T-cell (primary cell): ENCODE measurements at regions of chr2 and their contacts with region 1.

Region 1: DNA sequence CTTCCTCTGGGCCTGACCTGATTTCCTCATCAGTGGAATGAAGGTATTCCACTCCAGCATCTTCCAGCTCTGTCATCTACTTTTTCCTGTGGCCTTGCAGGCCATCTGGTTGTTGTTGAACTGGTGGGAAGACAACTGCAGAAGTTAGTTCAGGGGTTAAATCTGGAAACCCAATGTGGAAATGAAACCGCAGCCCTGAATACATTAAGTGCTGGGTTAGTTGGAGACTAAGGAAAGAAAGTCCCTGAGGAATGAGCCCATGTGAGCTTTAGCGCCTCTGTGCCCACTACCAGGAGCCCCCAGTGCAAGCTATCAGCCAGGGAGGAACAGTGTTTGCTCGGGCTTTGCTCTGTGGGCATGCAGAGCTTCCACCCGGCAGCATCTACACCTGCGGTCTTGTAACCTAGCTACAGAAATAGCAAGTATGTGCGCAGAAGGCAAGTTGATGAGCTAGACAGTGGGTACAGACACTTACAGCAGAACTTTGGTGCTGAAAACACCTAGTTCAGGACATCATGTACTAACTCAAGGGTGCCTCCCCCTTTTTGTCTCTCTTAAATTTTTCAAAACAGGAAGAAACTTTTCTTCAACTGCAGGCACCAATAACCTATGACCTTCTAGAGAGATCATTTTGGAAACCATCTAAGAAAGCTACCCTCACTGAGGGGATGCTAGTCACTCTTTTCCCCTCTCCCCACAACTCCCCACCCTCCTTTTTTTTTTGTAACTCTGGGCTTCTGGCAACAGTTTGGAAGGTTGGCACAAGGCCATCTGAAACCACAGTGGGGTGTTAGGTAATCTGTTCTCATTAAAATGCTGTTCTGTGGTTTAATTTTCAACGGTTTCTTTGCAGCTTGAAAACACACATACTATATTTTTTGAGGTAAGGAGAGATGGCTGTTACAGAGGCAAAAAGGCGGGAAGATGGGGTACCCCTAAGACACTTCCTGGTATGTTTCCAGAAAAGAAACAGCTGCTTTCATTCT is 18.3 kb upstream of the CXCR4 start:
- DNase-seq: peak; percentile 50 to 96 (median 88)
- ATAC-seq: peak; percentile 71 to 82 (median 77)
- H3K4me3 ChIP-seq: peak overlapping the region in 1 of 2 donors; percentile 26
- H3K4me3 Mint-ChIP-seq: peak overlapping the region; percentile 69 to 75 (median 71)
- H3K27ac ChIP-seq: peak overlapping the region; percentile 100
- H3K27ac Mint-ChIP-seq: peak overlapping the region; percentile 96 to 97
- H3K4me1 ChIP-seq: peaks cover 57 to 94% of the 10 kb centered on the region in 2 experiments
- H3K4me1 Mint-ChIP-seq: peaks cover 97 to 98% (median 97%) of the 10 kb centered on the region in 3 donors
- H3K27me3 ChIP-seq: no peaks in the 10 kb centered on the region
- H3K27me3 Mint-ChIP-seq: no peaks in the 10 kb centered on the region

Region 2: GRCh38 chr2:136055929-136056688 is 80.1 kb before region 1 on chr2:
- CTCF ChIA-PET with region 1: no interaction called
- POLR2A ChIA-PET with region 1: interaction called, 3 to 17 read pairs
- DNase-seq: no peak
- ATAC-seq: peak in 3 of 4 experiments; percentile 47 to 54 (median 54)
- H3K4me3 ChIP-seq: no peak overlapping the region
- H3K4me3 Mint-ChIP-seq: peak overlapping the region; percentile 1 to 57 (median 28)
- H3K27ac ChIP-seq: peak overlapping the region; percentile 65
- H3K27ac Mint-ChIP-seq: peak overlapping the region; percentile 89 to 92
- H3K4me1 ChIP-seq: peaks cover 15 to 56% of the 10 kb centered on the region in 2 experiments
- H3K4me1 Mint-ChIP-seq: peaks cover 80 to 89% (median 81%) of the 10 kb centered on the region in 3 donors
- H3K27me3 ChIP-seq: no peaks in the 10 kb centered on the region
- H3K27me3 Mint-ChIP-seq: no peaks in the 10 kb centered on the region

Region 3: GRCh38 chr2:136117909-136118818 is 18.1 kb before region 1 on chr2 and contains the start of gene CXCR4:
- CTCF ChIA-PET with region 1: interaction called in 1 of 2 experiments, 10 read pairs
- POLR2A ChIA-PET with region 1: interaction called, 24 to 121 read pairs
- DNase-seq: peak; percentile 82 to 98 (median 92)
- ATAC-seq: peak; percentile 34 to 54 (median 52)
- H3K4me3 ChIP-seq: peak within 1 kb of the TSS; percentile 89 to 100
- H3K4me3 Mint-ChIP-seq: peak within 1 kb of the TSS; percentile 94 to 99 (median 99)
- H3K27ac ChIP-seq: peak within 1 kb of the TSS; percentile 99
- H3K27ac Mint-ChIP-seq: peak within 1 kb of the TSS; percentile 96 to 97
- H3K4me1 ChIP-seq: peaks cover 26 to 37% of the 10 kb centered on the region in 2 experiments
- H3K4me1 Mint-ChIP-seq: peaks cover 65 to 73% (median 66%) of the 10 kb centered on the region in 3 donors
- H3K27me3 ChIP-seq: no peaks in the 10 kb centered on the region
- H3K27me3 Mint-ChIP-seq: no peaks in the 10 kb centered on the region
- total RNA-seq, gene CXCR4: 274 to 1,514 (median 326) TPM

Region 4: GRCh38 chr2:136154402-136154783 is 18.2 kb after region 1 on chr2:
- CTCF ChIA-PET with region 1: no interaction called
- POLR2A ChIA-PET with region 1: no interaction called
- DNase-seq: no peak
- ATAC-seq: no peak
- H3K4me3 ChIP-seq: no peak overlapping the region
- H3K4me3 Mint-ChIP-seq: no peak overlapping the region
- H3K27ac ChIP-seq: no peak overlapping the region
- H3K27ac Mint-ChIP-seq: no peak overlapping the region
- H3K4me1 ChIP-seq: peaks cover 0 to 3% of the 10 kb centered on the region in 2 experiments
- H3K4me1 Mint-ChIP-seq: peaks cover 15 to 22% (median 18%) of the 10 kb centered on the region in 3 donors
- H3K27me3 ChIP-seq: no peaks in the 10 kb centered on the region
- H3K27me3 Mint-ChIP-seq: no peaks in the 10 kb centered on the region

Region 5: GRCh38 chr2:136238286-136239078 is 102.3 kb after region 1 on chr2:
- CTCF ChIA-PET with region 1: interaction called, 5 to 20 read pairs
- POLR2A ChIA-PET with region 1: interaction called, 13 to 36 read pairs
- DNase-seq: peak in 34 of 35 experiments; percentile 18 to 77 (median 37)
- ATAC-seq: peak; percentile 73 to 88 (median 78)
- H3K4me3 ChIP-seq: no peak overlapping the region
- H3K4me3 Mint-ChIP-seq: peak overlapping the region; percentile 6 to 38 (median 18)
- H3K27ac ChIP-seq: peak overlapping the region; percentile 93
- H3K27ac Mint-ChIP-seq: peak overlapping the region; percentile 92 to 93
- H3K4me1 ChIP-seq: peaks cover 5 to 41% of the 10 kb centered on the region in 2 experiments
- H3K4me1 Mint-ChIP-seq: peaks cover 52 to 81% (median 75%) of the 10 kb centered on the region in 3 donors
- H3K27me3 ChIP-seq: no peaks in the 10 kb centered on the region
- H3K27me3 Mint-ChIP-seq: no peaks in the 10 kb centered on the region

Region 6: DNA sequence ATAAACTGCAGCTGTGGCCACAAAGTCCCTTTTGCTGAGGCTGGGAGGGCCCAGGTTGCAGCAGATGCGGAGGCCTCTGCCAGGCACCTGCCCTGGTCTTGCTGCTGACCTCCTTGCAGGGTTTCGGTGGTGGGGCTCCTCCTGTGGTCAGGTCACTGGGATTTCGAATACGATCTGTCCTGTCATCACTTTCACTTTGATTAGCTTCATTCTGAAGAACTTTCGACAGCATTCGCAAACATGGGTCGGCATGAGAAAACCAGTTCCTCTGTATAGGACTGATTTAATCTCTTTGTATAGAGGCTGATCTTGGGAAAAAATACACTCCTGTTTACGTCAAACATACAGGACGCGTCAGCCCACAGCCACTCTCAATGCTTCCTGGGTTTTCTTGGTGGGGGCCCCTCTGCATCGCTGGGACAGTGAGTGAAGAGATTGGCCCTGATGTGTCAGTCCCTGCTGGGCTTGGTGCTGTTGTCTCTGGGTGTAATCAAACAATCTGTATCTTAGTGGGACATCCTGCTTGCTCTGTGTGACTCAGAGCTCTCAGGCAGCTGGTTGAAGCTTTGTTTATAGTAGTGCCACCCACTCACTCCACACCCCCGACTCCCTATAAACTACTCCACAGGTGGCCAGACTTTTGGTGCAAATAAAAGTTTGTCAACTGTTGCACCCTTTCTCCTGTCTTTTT is 191.1 kb after region 1 on chr2:
- CTCF ChIA-PET with region 1: interaction called in 1 of 2 experiments, 14 read pairs
- POLR2A ChIA-PET with region 1: interaction called, 3 to 36 read pairs
- DNase-seq: peak; percentile 57 to 94 (median 82)
- ATAC-seq: peak; percentile 93 to 98 (median 96)
- H3K4me3 ChIP-seq: peak overlapping the region; percentile 29 to 41
- H3K4me3 Mint-ChIP-seq: peak overlapping the region; percentile 69 to 86 (median 75)
- H3K27ac ChIP-seq: peak overlapping the region; percentile 97
- H3K27ac Mint-ChIP-seq: peak overlapping the region; percentile 97 to 98
- H3K4me1 ChIP-seq: peaks cover 29% of the 10 kb centered on the region in 2 experiments
- H3K4me1 Mint-ChIP-seq: peaks cover 63 to 70% (median 69%) of the 10 kb centered on the region in 3 donors
- H3K27me3 ChIP-seq: no peaks in the 10 kb centered on the region
- H3K27me3 Mint-ChIP-seq: no peaks in the 10 kb centered on the region

Region 7: DNA sequence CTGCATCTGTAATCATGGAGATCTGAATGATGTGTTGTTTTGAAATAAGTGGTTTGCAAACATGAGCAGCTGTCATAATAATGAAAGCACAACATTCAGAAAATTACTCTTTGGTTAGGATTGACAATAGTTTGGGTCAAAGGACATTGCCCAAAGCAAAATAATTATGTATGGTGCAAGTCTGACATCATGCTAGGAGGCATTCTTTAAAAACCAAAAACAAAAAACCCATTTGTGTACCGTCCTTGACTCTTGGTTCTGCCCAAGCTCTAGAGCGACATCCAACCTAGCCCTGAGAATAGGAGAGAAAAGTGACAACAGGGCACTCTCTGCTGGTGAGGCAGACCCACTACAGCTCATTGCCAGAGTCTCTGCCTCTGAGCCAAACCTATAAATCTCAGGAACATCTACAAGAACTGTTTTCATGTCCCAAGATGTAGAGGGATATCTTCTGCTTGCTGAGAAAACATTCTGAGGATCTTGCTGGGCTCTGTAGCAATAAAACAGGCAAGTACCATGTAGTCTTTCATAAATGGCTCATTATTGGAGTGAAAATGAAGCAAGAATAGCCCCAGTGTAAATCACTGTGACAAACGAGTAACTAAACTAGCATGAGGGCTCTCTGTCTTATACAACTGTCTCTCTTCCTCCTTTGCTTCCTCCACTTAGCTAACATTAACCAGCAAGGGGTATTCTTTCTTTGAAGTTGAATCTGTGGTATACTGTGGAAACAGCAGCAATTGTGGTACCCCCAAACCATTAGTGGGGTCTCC is 248.5 kb after region 1 on chr2:
- CTCF ChIA-PET with region 1: interaction called in 1 of 2 experiments, 9 read pairs
- POLR2A ChIA-PET with region 1: interaction called, 8 to 25 read pairs
- DNase-seq: peak in 34 of 35 experiments; percentile 18 to 80 (median 48)
- ATAC-seq: peak; percentile 45 to 85 (median 76)
- H3K4me3 ChIP-seq: no peak overlapping the region
- H3K4me3 Mint-ChIP-seq: peak overlapping the region in 1 of 3 donors; percentile 9
- H3K27ac ChIP-seq: no peak overlapping the region
- H3K27ac Mint-ChIP-seq: peak overlapping the region in 1 of 2 donors; percentile 97
- H3K4me1 ChIP-seq: peaks cover 11 to 14% of the 10 kb centered on the region in 2 experiments
- H3K4me1 Mint-ChIP-seq: peaks cover 38 to 42% (median 39%) of the 10 kb centered on the region in 3 donors
- H3K27me3 ChIP-seq: no peaks in the 10 kb centered on the region
- H3K27me3 Mint-ChIP-seq: no peaks in the 10 kb centered on the region